ENCODE measurements at regions of chr5 and their contacts with region 1.

Region 1: DNA sequence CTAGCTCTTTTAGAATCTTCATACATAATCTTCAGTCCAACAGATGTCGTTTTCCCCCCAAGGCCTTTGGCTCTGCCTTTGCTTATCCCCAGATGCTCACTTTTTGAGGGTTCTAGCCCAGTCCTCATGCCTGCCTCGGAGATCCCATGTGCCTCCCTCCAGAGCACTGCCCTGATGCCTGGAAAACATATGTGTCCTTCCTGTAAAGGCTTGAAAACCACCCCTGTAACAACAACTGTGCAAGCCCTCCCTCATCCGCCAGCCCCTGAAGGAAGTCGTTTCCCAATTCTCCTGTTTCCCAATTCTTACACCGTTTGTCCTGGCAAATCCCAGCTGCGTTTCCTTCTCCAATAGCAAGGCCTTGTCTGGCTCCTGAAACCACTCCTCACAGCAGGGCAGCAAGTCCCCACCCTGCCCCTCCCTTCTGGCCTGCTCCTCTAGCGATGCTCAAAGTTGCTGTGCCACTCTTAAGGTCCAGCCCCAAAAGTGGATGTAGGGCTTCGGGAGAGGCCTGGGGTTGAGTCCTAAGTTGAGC is 52.2 kb downstream of the SLC36A1 start:
- DNase-seq: no peak
- ATAC-seq: no peak
- H3K4me3 Mint-ChIP-seq: no peak overlapping the region
- H3K27ac Mint-ChIP-seq: no peak overlapping the region
- H3K4me1 Mint-ChIP-seq: peaks cover 4% of the 10 kb centered on the region
- H3K27me3 Mint-ChIP-seq: no peaks in the 10 kb centered on the region

Region 2: DNA sequence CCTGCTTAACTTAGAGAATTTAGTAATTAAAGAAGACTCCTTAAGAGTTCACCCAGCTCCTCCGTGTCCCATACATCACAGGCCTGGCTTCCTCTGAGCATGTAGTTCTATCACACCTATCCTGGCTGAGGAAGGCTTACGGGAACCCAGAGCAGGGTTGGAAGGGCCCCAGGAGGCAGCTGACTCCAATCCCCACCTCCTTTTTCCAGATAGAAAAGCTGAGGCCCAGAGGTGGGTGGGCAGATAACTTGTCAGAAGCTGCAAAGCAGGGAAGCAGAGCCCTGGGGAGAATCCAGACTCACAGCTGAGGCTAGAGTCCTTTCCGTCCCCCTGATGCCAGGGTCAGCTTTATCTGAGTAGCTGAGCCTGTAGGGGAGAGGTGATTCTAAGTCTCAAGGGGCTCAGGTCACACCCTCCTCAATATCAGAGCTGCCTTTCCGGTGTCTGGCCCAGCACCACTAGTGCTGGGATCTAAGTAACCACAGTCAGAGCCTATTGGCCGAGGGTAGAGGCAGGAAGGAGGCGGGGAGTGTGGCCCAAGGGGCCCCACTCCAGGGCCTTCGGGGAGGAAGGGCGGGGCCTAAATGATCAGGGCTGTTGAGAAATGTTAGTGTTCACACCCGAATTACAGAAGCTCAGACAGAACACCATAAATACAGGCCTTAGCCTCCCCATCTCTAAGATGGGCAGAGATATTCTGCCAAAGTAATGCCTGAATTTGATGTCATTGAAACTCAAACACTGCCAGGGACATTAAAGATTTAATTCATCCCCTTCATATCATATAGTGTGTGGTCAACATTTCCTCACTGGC is 285.6 kb before region 1 on chr5:
- CTCF ChIA-PET with region 1: no interaction called
- POLR2A ChIA-PET with region 1: no interaction called
- intact Hi-C with region 1: no loop called
- DNase-seq: peak; percentile 92
- ATAC-seq: peak; percentile 89
- H3K4me3 Mint-ChIP-seq: peak overlapping the region; percentile 74
- H3K27ac Mint-ChIP-seq: peak overlapping the region; percentile 97
- H3K4me1 Mint-ChIP-seq: peaks cover 83% of the 10 kb centered on the region
- H3K27me3 Mint-ChIP-seq: no peaks in the 10 kb centered on the region

Region 3: DNA sequence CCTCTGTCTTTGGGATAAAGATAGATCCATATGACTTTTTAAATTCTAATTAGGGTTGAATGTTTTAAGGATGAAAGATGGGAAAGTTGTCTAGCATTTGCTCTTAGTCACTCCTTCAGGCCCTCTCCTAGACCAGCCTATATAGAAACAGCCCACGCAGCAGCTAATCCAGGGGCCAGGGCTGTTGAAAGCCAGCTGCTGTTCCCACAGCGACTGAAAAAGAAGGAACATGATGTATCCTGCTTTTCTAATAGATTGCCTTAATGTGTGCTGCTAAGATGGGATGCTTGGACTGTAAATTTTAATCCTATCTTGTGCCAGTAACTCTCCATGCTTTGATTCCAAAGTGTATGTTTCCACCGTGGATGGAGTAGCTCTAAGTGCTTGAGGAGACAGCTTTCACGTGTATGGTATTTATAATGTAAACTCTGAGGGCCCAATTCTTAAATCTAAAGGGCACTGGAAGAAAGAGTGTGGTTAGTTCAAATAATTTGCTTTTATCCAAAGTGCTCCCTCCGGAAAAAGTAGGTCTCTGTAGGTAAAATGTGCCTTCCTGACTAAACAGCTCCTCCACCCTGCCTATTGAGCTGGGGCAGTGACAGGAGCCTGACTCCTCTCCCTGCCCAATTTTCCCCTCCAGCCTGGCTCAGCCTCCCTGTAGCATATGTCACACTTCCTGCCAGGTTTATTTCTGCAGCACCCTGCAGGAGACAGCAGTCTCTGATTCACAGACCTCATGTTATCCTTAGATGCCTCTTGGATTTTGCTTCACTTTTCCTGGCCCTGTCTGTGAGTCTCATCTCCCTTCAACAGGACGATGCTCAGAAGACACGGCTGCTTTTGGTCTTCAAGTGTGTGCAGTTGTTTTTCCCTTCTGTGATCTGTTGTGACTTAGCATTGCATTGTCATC is 18.9 kb before region 1 on chr5:
- CTCF ChIA-PET with region 1: no interaction called
- POLR2A ChIA-PET with region 1: no interaction called
- intact Hi-C with region 1: no loop called
- DNase-seq: no peak
- ATAC-seq: no peak
- H3K4me3 Mint-ChIP-seq: no peak overlapping the region
- H3K27ac Mint-ChIP-seq: no peak overlapping the region
- H3K4me1 Mint-ChIP-seq: no peaks in the 10 kb centered on the region
- H3K27me3 Mint-ChIP-seq: no peaks in the 10 kb centered on the region

Region 4: DNA sequence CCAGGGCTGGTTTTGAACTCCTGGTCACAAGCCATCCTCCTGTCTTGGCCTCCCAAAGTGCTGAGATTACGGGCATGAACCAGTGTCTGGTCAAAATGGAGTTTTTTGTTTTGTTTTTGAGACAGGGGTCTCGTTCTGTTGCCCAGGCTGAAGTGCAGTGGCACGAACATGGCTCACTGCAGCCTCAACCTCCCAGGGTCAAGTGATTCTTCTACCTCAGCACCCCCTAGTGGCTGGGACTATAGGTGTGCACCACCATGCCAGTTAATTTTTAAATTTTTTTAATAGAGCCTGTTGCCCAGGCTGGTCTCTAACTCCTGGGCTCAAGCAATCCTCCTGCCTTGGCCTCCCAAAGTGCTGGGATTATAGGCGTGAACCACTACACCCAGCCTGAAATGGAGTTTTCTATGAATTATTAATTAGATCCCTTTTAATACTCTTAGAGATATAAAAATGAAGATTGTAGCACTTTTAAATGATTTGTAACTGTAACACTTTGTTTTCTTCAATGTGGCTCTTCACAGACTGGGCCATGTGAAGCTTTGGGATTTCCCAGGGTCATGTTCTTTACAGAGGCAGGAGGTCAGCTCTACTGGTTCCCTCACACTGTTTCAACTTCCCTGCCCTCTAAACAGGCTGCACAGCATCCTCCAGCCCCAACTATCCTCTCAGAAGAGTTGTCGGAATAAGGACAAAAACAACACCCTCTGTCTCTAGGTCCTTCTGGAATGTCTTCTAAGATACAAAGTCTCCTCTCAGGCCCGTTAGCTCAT is 219.8 kb after region 1 on chr5:
- CTCF ChIA-PET with region 1: no interaction called
- POLR2A ChIA-PET with region 1: no interaction called
- intact Hi-C with region 1: loop called in 1 of 2 experiments (anchors 1 kb)
- DNase-seq: peak; percentile 59
- ATAC-seq: peak; percentile 36
- H3K4me3 Mint-ChIP-seq: no peak overlapping the region
- H3K27ac Mint-ChIP-seq: no peak overlapping the region
- H3K4me1 Mint-ChIP-seq: peaks cover 11% of the 10 kb centered on the region
- H3K27me3 Mint-ChIP-seq: no peaks in the 10 kb centered on the region